ENCODE measurements at regions of chr9 and their contacts with region 1.

Region 1: DNA sequence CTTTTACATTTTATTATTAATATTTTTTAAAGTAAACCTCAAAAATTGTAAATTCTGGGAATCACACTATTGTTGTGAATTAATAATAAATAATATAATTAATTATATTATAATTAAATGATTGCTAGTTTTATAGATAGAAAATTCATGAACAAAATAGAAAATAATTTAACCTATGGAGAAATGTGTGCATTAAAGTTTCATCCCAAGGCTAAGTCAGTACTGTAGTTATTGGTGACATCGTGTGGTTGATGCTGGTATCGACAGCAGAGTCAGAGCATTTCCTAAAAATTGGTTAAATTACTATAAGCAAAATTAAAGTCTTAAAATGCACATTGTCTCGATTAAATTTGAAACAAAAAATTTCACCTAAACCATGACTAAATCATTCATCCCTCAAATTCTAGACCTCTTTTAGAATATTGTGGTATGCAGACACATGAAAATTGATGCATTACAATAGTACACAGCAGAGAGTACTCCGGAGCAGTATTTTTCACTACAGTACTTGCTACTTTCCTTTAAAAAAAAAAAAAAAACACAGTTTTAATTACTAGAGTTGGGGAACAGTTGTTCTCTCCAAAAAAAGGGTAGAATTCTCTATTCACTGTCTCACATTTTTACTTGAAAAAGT is 73.9 kb downstream of the RORB start:
- DNase-seq: peak; percentile 46
- H3K4me3 ChIP-seq: no peak overlapping the region
- H3K27ac ChIP-seq: no peak overlapping the region
- H3K4me1 ChIP-seq: no peaks in the 10 kb centered on the region
- H3K27me3 ChIP-seq: peaks cover 0 to 1% of the 10 kb centered on the region in 2 experiments
- CTCF ChIP-seq: peak; percentile 34 to 52
- POLR2A ChIP-seq: no peak

Region 2: DNA sequence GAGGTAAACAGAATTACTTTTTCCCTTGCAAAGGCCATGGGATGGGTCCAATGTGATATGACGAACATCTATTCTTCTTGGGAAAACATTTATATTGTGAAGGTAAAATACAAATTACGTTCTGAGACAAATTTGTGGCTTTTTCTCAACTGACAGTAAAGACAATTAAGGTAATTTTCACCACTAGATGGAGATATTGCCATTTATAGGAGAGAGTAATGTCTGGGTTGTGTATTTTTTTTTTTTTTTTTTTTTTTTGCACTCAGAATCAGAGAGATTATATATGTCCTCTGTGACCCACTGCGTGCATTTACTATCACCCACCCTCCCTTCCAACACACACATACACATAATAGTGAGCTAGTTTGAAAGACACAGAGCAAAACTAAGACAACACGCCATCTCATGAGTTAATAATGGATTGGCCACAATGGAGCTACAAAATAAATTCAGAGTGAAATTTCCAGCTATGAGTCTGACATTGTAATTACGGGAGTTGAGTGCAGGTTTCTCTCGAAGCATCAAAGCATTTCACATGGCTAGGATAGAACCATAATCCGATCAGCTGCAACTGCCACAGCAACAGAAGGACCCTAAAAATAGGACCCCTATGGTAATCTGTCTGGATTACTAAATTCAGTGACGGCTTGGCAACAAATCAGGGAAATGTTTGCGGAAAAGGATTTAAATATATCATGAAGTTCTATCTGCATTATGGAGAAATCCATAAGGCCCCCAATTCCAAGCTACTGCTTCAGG is 1370.1 kb before region 1 on chr9:
- CTCF ChIA-PET with region 1: interaction called, 77 read pairs
- POLR2A ChIA-PET with region 1: no interaction called
- dilution Hi-C with region 1: no loop called
- intact Hi-C with region 1: loop called (anchors 1 kb)
- DNase-seq: peak; percentile 39
- H3K4me3 ChIP-seq: no peak overlapping the region
- H3K27ac ChIP-seq: no peak overlapping the region
- H3K4me1 ChIP-seq: no peaks in the 10 kb centered on the region
- H3K27me3 ChIP-seq: peaks cover 4 to 10% of the 10 kb centered on the region in 2 experiments
- CTCF ChIP-seq: peak; percentile 37 to 40
- POLR2A ChIP-seq: no peak

Region 3: DNA sequence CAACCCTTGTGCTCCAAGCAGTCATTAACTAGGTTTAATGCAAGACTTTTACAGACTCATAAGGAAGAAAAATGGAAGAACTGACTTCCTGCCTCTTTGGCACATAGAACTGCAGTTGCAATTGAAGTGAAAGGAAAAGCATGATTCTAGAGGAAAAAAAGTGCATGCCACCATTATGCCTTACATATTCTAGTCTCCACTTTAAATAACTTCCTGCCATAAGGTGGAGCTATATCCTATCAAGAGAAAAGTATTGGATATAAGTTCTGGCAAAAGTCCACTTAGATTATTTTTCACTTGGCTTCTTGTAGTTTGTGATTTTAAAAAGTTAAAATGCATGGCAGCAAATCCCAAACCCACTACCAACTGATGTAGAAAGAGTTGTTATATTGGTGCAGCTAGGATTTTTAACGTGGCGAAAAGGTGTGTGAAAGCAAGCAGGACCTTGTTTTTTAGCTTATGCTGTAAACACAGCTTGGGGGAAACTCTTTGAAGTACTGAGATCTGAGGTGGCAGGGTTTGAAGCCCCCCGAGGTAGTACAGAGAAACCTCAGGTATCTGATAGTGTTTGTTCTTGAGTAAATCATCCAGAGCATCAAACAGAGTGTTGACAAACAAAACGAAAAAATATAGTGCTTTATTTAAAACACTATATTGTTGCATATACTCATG is 1301.4 kb before region 1 on chr9:
- CTCF ChIA-PET with region 1: interaction called, 13 read pairs
- POLR2A ChIA-PET with region 1: no interaction called
- dilution Hi-C with region 1: no loop called
- intact Hi-C with region 1: loop called (anchors 2 kb)
- DNase-seq: peak; percentile 13
- H3K4me3 ChIP-seq: no peak overlapping the region
- H3K27ac ChIP-seq: no peak overlapping the region
- H3K4me1 ChIP-seq: peaks cover 5% of the 10 kb centered on the region
- H3K27me3 ChIP-seq: peaks cover 0 to 6% of the 10 kb centered on the region in 2 experiments
- CTCF ChIP-seq: peak in 1 of 2 donors; percentile 6
- POLR2A ChIP-seq: no peak

Region 4: GRCh38 chr9:74006935-74007334 is 564.1 kb before region 1 on chr9:
- CTCF ChIA-PET with region 1: no interaction called
- POLR2A ChIA-PET with region 1: no interaction called
- dilution Hi-C with region 1: no loop called
- intact Hi-C with region 1: no loop called
- DNase-seq: no peak
- H3K4me3 ChIP-seq: no peak overlapping the region
- H3K27ac ChIP-seq: no peak overlapping the region
- H3K4me1 ChIP-seq: no peaks in the 10 kb centered on the region
- H3K27me3 ChIP-seq: no peaks in the 10 kb centered on the region
- CTCF ChIP-seq: no peak
- POLR2A ChIP-seq: no peak

Region 5: DNA sequence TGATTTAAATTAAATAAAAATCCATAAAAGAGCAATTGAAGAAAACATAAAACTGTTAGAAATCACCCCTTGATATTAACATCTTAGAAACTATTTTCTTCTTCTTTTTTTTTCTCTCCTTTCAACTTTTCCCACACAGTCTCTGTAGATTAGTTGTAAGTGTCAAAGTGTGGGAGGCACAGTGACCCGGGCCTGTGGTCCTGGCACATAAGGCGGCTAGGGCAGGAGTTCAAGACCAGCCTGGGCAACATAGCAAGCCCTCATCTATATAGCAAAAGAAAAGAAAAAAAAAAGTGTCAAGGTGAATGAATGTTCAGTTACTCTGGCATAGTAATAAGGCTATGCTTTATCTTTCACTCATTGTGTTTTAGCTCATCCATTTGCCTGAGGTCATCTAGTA is 59.7 kb before region 1 on chr9:
- CTCF ChIA-PET with region 1: no interaction called
- POLR2A ChIA-PET with region 1: no interaction called
- dilution Hi-C with region 1: no loop called
- intact Hi-C with region 1: no loop called
- DNase-seq: no peak
- H3K4me3 ChIP-seq: no peak overlapping the region
- H3K27ac ChIP-seq: no peak overlapping the region
- H3K4me1 ChIP-seq: no peaks in the 10 kb centered on the region
- H3K27me3 ChIP-seq: no peaks in the 10 kb centered on the region
- CTCF ChIP-seq: no peak
- POLR2A ChIP-seq: no peak

Region 6: DNA sequence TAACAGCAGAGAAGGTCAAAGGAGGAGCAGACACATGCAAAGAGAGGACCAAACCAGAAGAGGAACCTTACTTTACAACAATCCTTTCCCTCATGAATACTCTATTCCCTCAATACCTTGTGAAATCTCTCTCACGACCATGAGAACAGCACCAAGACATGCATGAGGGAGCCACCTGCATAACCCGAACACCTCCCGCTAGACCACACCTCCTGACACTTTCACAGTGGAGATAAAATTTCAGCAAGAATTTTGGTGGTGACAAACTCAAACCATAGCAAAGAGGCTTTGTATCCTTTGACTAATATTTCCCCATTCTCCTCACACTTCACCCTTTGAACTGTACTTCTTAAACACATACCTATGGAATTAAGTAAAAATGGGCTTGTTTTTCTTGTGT is 27.9 kb after region 1 on chr9:
- CTCF ChIA-PET with region 1: no interaction called
- POLR2A ChIA-PET with region 1: no interaction called
- dilution Hi-C with region 1: no loop called
- intact Hi-C with region 1: no loop called
- DNase-seq: no peak
- H3K4me3 ChIP-seq: no peak overlapping the region
- H3K27ac ChIP-seq: no peak overlapping the region
- H3K4me1 ChIP-seq: no peaks in the 10 kb centered on the region
- H3K27me3 ChIP-seq: no peaks in the 10 kb centered on the region
- CTCF ChIP-seq: no peak
- POLR2A ChIP-seq: no peak

Region 7: DNA sequence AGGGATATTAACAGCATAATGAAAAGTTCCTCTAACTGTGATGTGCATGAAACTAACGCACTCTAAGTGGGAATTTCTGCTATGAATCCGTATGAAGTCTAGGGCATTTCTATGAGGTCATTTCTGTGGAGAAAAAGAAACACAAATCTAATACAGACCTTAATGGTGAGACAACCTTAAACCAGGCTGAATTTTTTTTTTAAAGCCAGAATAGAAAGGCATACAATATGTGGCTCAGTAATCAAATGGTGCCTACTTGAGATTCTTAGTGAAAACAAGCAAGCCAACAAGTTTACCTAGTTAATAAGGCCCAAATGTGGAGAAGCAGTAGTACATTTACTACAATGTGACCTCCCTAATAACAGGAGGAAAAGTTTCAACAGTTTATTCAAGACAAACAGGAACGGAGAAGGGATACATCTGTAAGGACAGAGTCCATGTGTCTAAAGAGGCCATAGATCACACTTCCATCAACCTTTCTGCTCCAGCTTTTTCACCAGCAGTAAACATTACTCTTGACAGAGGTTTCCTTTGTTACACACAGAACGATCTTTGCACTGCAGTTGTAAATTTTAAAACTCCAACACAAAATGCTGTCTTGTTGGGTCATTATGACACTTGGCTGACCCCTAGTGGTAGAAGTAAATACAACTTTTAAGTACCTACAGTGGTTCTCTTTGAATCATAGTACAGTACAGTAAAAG is 430.9 kb after region 1 on chr9:
- CTCF ChIA-PET with region 1: no interaction called
- POLR2A ChIA-PET with region 1: no interaction called
- dilution Hi-C with region 1: no loop called
- intact Hi-C with region 1: no loop called
- DNase-seq: peak; percentile 82
- H3K4me3 ChIP-seq: no peak overlapping the region
- H3K27ac ChIP-seq: peak overlapping the region; percentile 18
- H3K4me1 ChIP-seq: peaks cover 2% of the 10 kb centered on the region
- H3K27me3 ChIP-seq: no peaks in the 10 kb centered on the region
- CTCF ChIP-seq: peak; percentile 53 to 56
- POLR2A ChIP-seq: no peak